Activated CD4-positive, alpha-beta T cell treated with anti-CD3 and anti-CD28 coated beads for 36 hours (primary cell): ENCODE measurements at regions of chr12 and their contacts with region 1.

Region 1: DNA sequence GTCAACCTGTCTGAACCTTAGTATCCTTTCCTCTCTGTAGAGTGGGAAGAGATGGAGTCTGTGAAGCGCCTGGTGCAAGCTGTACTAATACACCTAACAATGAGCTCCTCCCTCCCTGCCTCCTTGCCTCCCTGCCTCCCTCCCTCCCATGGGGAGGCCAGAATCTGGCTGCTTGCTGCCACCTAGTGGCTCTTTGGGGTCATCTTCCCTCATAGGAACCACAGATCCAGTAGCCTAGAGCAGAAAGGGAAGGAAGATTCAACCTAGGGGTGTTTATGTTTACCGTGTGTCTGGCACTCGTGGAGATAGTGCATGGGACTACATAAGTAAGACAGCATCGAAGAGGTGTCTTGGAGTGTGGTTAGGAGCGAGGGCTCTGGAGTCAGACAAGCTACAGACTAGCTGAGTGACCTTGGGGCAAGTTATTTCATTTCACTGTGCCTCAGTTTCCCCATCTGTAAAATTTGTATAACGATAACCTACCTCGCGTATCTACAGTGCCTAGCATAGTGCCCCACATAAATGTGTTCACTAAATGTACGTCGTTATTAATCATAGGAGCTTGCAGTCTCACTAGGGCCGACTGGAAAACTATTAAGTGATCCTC is 35.5 kb upstream of the TSPAN9 start:
- DNase-seq: peak; percentile 79
- ATAC-seq: peak; percentile 98
- H3K4me3 Mint-ChIP-seq: no peak overlapping the region
- H3K27ac Mint-ChIP-seq: no peak overlapping the region
- H3K4me1 Mint-ChIP-seq: no peaks in the 10 kb centered on the region
- H3K27me3 Mint-ChIP-seq: peaks cover 22% of the 10 kb centered on the region

Region 2: DNA sequence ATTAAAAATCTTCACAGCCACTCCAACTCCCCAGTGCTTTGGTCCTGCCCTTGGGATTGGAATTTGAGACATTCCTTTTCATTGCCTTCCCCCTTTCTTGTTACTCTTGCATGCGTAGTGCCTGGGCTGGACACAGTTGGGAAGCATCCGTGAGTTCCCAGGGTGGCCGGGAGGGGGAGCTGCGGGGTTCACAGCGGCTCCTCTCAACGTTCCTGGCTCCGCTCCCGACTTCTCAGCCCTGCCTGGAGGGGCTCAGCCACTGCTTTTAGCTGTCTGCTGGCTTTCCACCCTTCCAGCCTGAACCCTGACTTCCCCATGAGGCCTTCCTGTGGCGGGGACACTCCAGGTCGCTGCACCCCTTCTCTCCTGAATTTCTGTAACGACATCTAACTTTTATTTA is 188.0 kb before region 1 on chr12:
- CTCF ChIA-PET with region 1: interaction called, 3 read pairs
- POLR2A ChIA-PET with region 1: no interaction called
- intact Hi-C with region 1: loop called in 1 of 2 experiments (anchors 1 kb)
- DNase-seq: peak; percentile 74
- ATAC-seq: peak; percentile 78
- H3K4me3 Mint-ChIP-seq: no peak overlapping the region
- H3K27ac Mint-ChIP-seq: no peak overlapping the region
- H3K4me1 Mint-ChIP-seq: peaks cover 3% of the 10 kb centered on the region
- H3K27me3 Mint-ChIP-seq: no peaks in the 10 kb centered on the region

Region 3: GRCh38 chr12:2884810-2885209 is 156.9 kb before region 1 on chr12:
- CTCF ChIA-PET with region 1: interaction called, 4 read pairs
- POLR2A ChIA-PET with region 1: no interaction called
- intact Hi-C with region 1: loop called in 1 of 2 experiments (anchors 2 kb)
- DNase-seq: no peak
- ATAC-seq: no peak
- H3K4me3 Mint-ChIP-seq: no peak overlapping the region
- H3K27ac Mint-ChIP-seq: no peak overlapping the region
- H3K4me1 Mint-ChIP-seq: peaks cover 13% of the 10 kb centered on the region
- H3K27me3 Mint-ChIP-seq: no peaks in the 10 kb centered on the region

Region 4: GRCh38 chr12:3060778-3061458 is 19.3 kb after region 1 on chr12:
- CTCF ChIA-PET with region 1: no interaction called
- POLR2A ChIA-PET with region 1: no interaction called
- intact Hi-C with region 1: no loop called
- DNase-seq: no peak
- ATAC-seq: no peak
- H3K4me3 Mint-ChIP-seq: no peak overlapping the region
- H3K27ac Mint-ChIP-seq: no peak overlapping the region
- H3K4me1 Mint-ChIP-seq: no peaks in the 10 kb centered on the region
- H3K27me3 Mint-ChIP-seq: peaks cover 30% of the 10 kb centered on the region

Region 5: GRCh38 chr12:3622021-3622821 is 580.6 kb after region 1 on chr12:
- CTCF ChIA-PET with region 1: no interaction called
- POLR2A ChIA-PET with region 1: no interaction called
- intact Hi-C with region 1: no loop called
- DNase-seq: no peak
- ATAC-seq: peak; percentile 83
- H3K4me3 Mint-ChIP-seq: no peak overlapping the region
- H3K27ac Mint-ChIP-seq: no peak overlapping the region
- H3K4me1 Mint-ChIP-seq: peaks cover under 1% of the 10 kb centered on the region
- H3K27me3 Mint-ChIP-seq: no peaks in the 10 kb centered on the region